Endothelial cell of umbilical vein (primary cell): ENCODE measurements at regions of chr3 and their contacts with region 1.

Region 1: DNA sequence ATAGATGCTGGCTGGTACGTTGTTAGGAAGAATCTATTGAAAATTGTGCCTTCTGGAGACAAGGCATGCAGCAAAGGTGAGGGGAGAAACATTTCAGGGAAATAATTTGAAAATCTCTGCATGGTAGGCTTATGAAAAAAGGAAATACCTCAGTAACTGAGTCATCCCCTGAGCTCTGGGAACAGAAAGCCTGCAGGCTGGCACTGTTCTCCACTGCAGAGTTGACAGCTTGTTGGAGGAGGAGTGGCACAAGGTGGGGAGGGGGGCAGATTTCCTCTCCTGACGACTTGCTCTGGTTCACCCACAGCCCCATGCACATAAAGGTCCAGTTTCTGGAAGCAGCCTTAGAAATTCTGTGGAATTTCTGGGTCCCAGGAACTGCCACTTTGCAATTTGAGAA is 179.4 kb downstream of the ABHD5 start:
- DNase-seq: peak; percentile 77
- H3K4me3 ChIP-seq: no peak overlapping the region
- H3K27ac ChIP-seq: peak overlapping the region; percentile 49
- H3K4me1 ChIP-seq: peaks cover 49% of the 10 kb centered on the region
- H3K27me3 ChIP-seq: no peaks in the 10 kb centered on the region
- CTCF ChIP-seq: no peak
- POLR2A ChIP-seq: no peak

Region 2: GRCh38 chr3:43707998-43708397 is 162.1 kb before region 1 on chr3:
- CTCF ChIA-PET with region 1: no interaction called
- POLR2A ChIA-PET with region 1: no interaction called
- dilution Hi-C with region 1: no loop called
- intact Hi-C with region 1: loop called (anchors 5 kb)
- DNase-seq: peak; percentile 70
- H3K4me3 ChIP-seq: no peak overlapping the region
- H3K27ac ChIP-seq: peak overlapping the region; percentile 35
- H3K4me1 ChIP-seq: peaks cover 20% of the 10 kb centered on the region
- H3K27me3 ChIP-seq: no peaks in the 10 kb centered on the region
- CTCF ChIP-seq: no peak
- POLR2A ChIP-seq: no peak

Region 3: DNA sequence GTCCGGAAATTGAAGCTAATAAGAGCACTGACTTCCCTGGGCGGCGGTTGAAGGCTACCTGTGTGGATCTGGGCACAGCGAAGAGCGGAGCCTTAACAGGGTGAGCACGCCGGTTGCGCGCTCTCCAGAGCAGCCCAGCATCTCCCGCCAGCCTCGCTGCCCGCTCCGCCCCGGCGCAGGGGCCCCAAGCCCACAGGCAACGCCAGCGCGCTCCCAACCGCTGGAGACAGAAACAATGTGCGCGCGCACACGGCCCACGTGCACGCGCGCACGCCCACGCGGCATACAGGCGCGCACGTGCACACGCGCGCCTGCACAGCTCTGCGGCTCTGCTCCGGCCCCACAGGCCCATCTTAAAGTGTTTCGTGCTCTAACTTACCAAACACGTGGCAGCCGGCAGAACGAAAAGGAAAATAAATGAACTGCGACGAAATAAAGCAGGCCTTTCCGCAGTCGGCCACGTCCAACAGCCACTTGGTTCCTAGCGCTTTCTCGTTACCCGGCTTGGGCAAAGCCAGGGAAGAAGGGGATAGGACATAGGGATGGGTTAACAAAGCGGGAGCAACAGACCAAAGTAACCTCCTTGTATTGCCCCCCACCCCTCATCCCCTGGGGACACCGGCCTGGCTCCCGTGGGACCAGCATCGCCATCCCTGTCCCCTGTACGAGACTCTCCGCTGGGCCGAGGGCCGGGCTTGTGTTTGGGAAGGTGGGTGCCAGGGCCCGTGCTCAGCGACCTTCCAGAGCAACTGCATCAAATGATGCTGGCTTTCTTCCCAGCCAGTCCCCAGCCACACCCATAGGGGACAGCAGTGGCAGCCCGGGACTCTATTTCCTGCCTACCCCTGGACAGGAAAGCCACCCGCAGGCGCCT is 24.3 kb after region 1 on chr3:
- CTCF ChIA-PET with region 1: interaction called, 4 read pairs
- POLR2A ChIA-PET with region 1: no interaction called
- dilution Hi-C with region 1: no loop called
- intact Hi-C with region 1: loop called (anchors 1 kb)
- DNase-seq: peak; percentile 77
- H3K4me3 ChIP-seq: peak overlapping the region; percentile 45 to 69 (median 57)
- H3K27ac ChIP-seq: peak overlapping the region; percentile 57
- H3K4me1 ChIP-seq: peaks cover 9% of the 10 kb centered on the region
- H3K27me3 ChIP-seq: peaks cover 10 to 30% of the 10 kb centered on the region in 2 experiments
- CTCF ChIP-seq: no peak
- POLR2A ChIP-seq: no peak